A549 (cell line): ENCODE measurements at regions of chr12 and their contacts with region 1.

Region 1: DNA sequence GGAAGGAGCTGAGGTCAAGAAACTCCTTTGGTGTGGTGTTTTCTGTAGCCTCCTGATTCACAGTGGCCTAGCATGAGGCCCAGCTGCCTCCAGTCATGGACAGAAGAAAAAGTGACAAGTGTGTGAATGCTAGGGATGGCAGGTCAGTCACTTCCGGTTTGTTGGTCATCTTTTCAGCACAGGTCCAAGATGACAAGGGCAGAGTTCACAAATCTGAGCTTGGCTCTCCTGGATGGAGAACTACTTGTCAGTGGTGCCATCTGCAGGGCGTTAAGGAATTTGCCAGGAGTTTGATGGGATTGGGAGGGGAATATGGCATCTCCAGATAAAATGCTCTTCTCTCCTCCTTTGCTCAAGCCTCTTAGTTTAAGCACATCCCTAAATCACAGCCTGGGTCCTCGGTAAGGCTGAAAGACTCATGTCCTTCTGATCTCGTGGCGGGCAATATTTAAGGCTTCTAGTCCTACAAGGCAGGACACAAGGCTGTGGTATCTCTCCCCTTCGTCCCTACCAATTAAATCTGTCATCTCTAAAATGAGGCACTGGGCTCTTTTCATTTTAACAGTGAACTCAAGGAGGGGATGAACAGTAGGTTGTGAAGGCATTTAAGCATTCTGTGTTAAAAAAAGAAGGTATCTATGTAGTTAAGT is 10.0 kb downstream of the TUBA1B start:
- DNase-seq: peak; percentile 86 to 91
- ATAC-seq: peak; percentile 84 to 94
- H3K4me3 ChIP-seq: no peak overlapping the region
- H3K27ac ChIP-seq: peak overlapping the region in 1 of 2 experiments; percentile 42; a peak in 2 of 6 replicates
- H3K4me1 ChIP-seq: no peaks in the 10 kb centered on the region
- CTCF ChIP-seq: peak; percentile 75
- EP300 ChIP-seq: no peak
- POLR2A ChIP-seq: no peak
- RAD21 ChIP-seq: peak; percentile 77 to 87

Region 2: GRCh38 chr12:48995061-48995879 is 125.9 kb before region 1 on chr12:
- CTCF ChIA-PET with region 1: interaction called, 10 read pairs
- POLR2A ChIA-PET with region 1: no interaction called
- DNase-seq: peak; percentile 89 to 99
- ATAC-seq: peak; percentile 65 to 76
- H3K4me3 ChIP-seq: peak overlapping the region; percentile 32
- H3K27ac ChIP-seq: peak overlapping the region; percentile 32 to 56; a peak in 3 of 6 replicates
- H3K4me1 ChIP-seq: peaks cover 18% of the 10 kb centered on the region
- CTCF ChIP-seq: peak; percentile 66
- EP300 ChIP-seq: no peak
- POLR2A ChIP-seq: no peak
- RAD21 ChIP-seq: peak; percentile 81 to 83

Region 3: GRCh38 chr12:49098035-49098451 is 23.1 kb before region 1 on chr12:
- CTCF ChIA-PET with region 1: interaction called, 77 read pairs
- POLR2A ChIA-PET with region 1: no interaction called
- DNase-seq: peak; percentile 65 to 74
- ATAC-seq: peak; percentile 41 to 76; a peak in 4 of 6 replicates
- H3K4me3 ChIP-seq: no peak overlapping the region
- H3K27ac ChIP-seq: no peak overlapping the region
- H3K4me1 ChIP-seq: 0 out of 3 replicates have a peak, but pooled peaks cover 5% of the 10 kb centered on the region
- CTCF ChIP-seq: peak; percentile 69
- EP300 ChIP-seq: no peak
- POLR2A ChIP-seq: no peak
- RAD21 ChIP-seq: peak; percentile 36 to 49; a peak in 4 of 5 replicates

Region 4: GRCh38 chr12:49105608-49106007 is 15.6 kb before region 1 on chr12:
- CTCF ChIA-PET with region 1: interaction called, 26 read pairs
- POLR2A ChIA-PET with region 1: interaction called, 8 read pairs
- DNase-seq: no peak
- ATAC-seq: no peak
- H3K4me3 ChIP-seq: no peak overlapping the region
- H3K27ac ChIP-seq: no peak overlapping the region
- H3K4me1 ChIP-seq: peaks cover 15% of the 10 kb centered on the region
- CTCF ChIP-seq: no peak
- EP300 ChIP-seq: no peak
- POLR2A ChIP-seq: no peak
- RAD21 ChIP-seq: no peak

Region 5: DNA sequence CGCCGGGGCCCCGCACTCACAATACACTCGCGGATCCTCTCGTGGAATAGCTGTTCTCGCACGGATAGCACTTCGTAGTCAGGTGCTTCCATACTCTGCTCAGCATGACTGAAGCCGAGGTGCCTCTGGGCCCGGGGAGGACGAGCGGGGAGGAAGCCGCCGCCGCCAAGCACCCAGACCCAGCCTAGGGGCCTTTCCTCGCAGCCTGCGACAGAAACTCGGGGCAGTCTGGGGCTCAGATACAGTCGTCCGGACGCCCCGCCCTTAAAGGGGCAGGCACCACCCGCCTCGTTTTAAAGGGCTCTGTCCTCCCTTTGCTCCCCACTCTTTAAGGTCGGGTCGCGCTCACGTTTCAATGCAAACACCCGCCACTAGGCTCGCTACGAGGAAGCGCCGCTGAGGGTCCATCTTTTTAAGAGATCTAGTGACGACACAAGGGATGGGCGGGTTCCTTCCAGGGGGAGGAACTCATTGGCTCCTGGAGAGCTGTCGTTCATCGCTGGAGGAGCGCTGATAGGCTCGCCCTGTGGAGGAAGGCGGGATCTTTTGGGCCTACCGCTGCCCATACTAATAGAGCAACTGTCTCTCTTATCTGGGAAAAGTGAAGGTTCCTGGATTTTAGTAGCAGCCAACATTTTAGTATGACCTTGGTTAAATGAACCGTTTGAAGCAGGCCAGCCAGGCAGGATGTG is 10.6 kb before region 1 on chr12 and contains the start of gene LMBR1L:
- CTCF ChIA-PET with region 1: interaction called, 26 read pairs
- POLR2A ChIA-PET with region 1: interaction called, 8 read pairs
- DNase-seq: peak; percentile 99 to 100
- ATAC-seq: peak; percentile 98 to 99
- H3K4me3 ChIP-seq: peak within 1 kb of the TSS; percentile 89
- H3K27ac ChIP-seq: peak within 1 kb of the TSS; percentile 79 to 93
- H3K4me1 ChIP-seq: peaks cover 15% of the 10 kb centered on the region
- CTCF ChIP-seq: no peak
- EP300 ChIP-seq: no peak
- POLR2A ChIP-seq: peak; percentile 65
- RAD21 ChIP-seq: no peak
- polyA plus RNA-seq, gene LMBR1L: 25.1 and 35.7 TPM in 2 replicates